ENCODE measurements at regions of chr11 and their contacts with region 1.

Region 1: GRCh38 chr11:14463623-14464022 is 36.0 kb downstream of the COPB1 start:
- DNase-seq: no peak
- ATAC-seq: no peak

Region 2: GRCh38 chr11:14506532-14506931 is 42.9 kb after region 1 on chr11:
- intact Hi-C with region 1: loop called (anchors 5 kb)
- DNase-seq: no peak
- ATAC-seq: no peak

Region 3: DNA sequence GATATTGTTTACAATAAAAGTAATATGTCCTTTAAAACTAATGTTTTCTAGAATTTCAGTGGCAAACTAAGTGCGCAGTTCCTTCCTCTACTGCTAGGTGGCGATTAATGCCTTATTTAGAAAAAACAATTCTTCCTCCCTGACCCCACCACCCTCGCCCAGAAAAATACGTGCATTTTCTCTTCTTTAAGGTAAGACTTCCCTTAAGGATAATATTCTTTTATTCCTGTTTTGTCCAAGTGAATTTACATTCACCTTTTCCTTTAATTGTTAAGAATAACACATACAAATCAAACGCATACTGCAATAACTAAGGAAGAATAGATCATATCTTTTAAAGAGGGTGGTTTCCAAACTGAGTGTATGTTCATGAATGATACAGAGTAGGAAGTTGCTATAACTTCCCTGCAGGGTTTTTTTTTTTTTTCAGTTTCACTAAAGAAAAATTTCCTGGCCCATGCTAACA is 73.5 kb after region 1 on chr11:
- intact Hi-C with region 1: no loop called
- DNase-seq: no peak
- ATAC-seq: no peak

Region 4: GRCh38 chr11:15453211-15453765 is 989.7 kb after region 1 on chr11:
- intact Hi-C with region 1: no loop called
- DNase-seq: no peak
- ATAC-seq: no peak

Measured in Right ventricle myocardium inferior (tissue), 1 donor.